ENCODE measurements at regions of chr17 and their contacts with region 1.

Region 1: GRCh38 chr17:38428112-38428642 is at the start of gene ARHGAP23:
- DNase-seq: peak in 1 of 2 experiments; percentile 67
- H3K4me3 ChIP-seq: peak within 1 kb of the TSS; percentile 66 to 91 (median 72)
- H3K27ac ChIP-seq: no peak within 1 kb of the TSS; the same call in 1 of the 2 replicates
- H3K4me1 ChIP-seq: peaks cover 22 to 35% (median 25%) of the 10 kb centered on the region in 4 experiments
- H3K27me3 ChIP-seq: no peaks in the 10 kb centered on the region
- CTCF ChIP-seq: no peak
- EP300 ChIP-seq: no peak
- POLR2A ChIP-seq: no peak
- RAD21 ChIP-seq: peak in 1 of 2 experiments; percentile 1; a peak in 1 of 4 replicates
- total RNA-seq, gene ARHGAP23: 107 and 108 TPM in 2 replicates

Region 2: GRCh38 chr17:38464723-38465390 is 36.7 kb after region 1 on chr17:
- CTCF ChIA-PET with region 1: interaction called, 11 read pairs
- POLR2A ChIA-PET with region 1: interaction called, 3 read pairs
- DNase-seq: no peak
- H3K4me3 ChIP-seq: no peak overlapping the region
- H3K27ac ChIP-seq: peak overlapping the region; percentile 54
- H3K4me1 ChIP-seq: peaks cover 0 to 8% (median 1%) of the 10 kb centered on the region in 4 experiments; a peak in 4 of 7 replicates
- H3K27me3 ChIP-seq: no peaks in the 10 kb centered on the region
- CTCF ChIP-seq: no peak
- EP300 ChIP-seq: no peak
- POLR2A ChIP-seq: no peak
- RAD21 ChIP-seq: no peak